Activated CD4-positive, alpha-beta memory T cell treated with anti-CD3 and anti-CD28 coated beads for 36 hours (primary cell): ENCODE measurements at regions of chr4 and their contacts with region 1.

Region 1: GRCh38 chr4:121156822-121157769 is 7.0 kb downstream of the TNIP3 start:
- DNase-seq: peak; percentile 21
- H3K4me3 Mint-ChIP-seq: peak overlapping the region; percentile 68
- H3K27ac Mint-ChIP-seq: peak overlapping the region; percentile 20
- H3K4me1 Mint-ChIP-seq: peaks cover 42% of the 10 kb centered on the region
- H3K27me3 Mint-ChIP-seq: peaks cover 12% of the 10 kb centered on the region

Region 2: GRCh38 chr4:121112530-121112929 is 44.6 kb before region 1 on chr4:
- CTCF ChIA-PET with region 1: no interaction called
- POLR2A ChIA-PET with region 1: no interaction called
- intact Hi-C with region 1: loop called (anchors 2 kb)
- DNase-seq: no peak
- H3K4me3 Mint-ChIP-seq: no peak overlapping the region
- H3K27ac Mint-ChIP-seq: no peak overlapping the region
- H3K4me1 Mint-ChIP-seq: peaks cover 12% of the 10 kb centered on the region
- H3K27me3 Mint-ChIP-seq: no peaks in the 10 kb centered on the region

Region 3: GRCh38 chr4:121139533-121140222 is 17.4 kb before region 1 on chr4:
- CTCF ChIA-PET with region 1: interaction called, 3 read pairs
- POLR2A ChIA-PET with region 1: no interaction called
- intact Hi-C with region 1: loop called (anchors 1 kb)
- DNase-seq: no peak
- H3K4me3 Mint-ChIP-seq: no peak overlapping the region
- H3K27ac Mint-ChIP-seq: no peak overlapping the region
- H3K4me1 Mint-ChIP-seq: peaks cover 37% of the 10 kb centered on the region
- H3K27me3 Mint-ChIP-seq: no peaks in the 10 kb centered on the region

Region 4: GRCh38 chr4:121510341-121510874 is 353.3 kb after region 1 on chr4:
- CTCF ChIA-PET with region 1: no interaction called
- POLR2A ChIA-PET with region 1: no interaction called
- intact Hi-C with region 1: loop called (anchors 5 kb)
- DNase-seq: peak; percentile 26
- H3K4me3 Mint-ChIP-seq: no peak overlapping the region
- H3K27ac Mint-ChIP-seq: no peak overlapping the region
- H3K4me1 Mint-ChIP-seq: peaks cover 9% of the 10 kb centered on the region
- H3K27me3 Mint-ChIP-seq: peaks cover 30% of the 10 kb centered on the region